ENCODE measurements at regions of chr10 and their contacts with region 1.

Region 1: DNA sequence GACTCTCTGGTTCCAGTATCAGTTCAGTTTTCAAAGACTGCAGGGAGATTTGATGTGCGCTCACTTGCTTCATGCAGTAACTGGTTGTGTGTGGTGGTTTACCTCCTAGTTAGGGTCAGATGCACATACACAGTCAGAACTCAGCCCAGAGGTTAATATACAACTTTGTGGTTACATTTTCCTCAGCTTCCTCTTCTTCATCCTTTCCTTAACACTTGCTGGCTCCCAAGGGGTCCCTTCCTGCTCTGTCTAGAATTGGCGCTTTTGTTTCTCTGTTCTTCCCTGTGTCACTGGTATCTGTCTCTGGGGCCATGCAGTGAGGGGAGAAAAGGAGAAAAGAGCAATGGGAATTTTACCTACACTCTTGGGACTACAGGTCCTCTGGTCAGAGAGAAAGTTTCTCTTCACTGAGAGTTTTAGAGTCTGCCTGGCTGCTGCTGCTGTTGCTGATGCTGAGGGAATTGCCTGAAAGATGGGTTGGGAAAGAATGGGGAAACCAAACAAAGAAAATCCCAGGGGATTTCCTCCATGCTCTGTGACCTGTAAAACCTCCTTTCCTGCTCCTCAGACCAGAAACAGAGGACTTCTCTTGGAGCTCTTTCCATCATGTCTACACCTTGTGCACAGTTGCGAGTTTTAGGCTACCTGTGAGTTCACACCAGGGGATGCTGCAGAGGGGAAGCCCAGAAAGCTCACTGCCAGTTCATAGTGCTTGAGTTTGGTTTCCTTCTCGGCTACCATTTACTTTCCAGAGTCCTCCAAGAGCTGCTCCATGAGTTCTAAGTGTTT is 74.6 kb downstream of the WDFY4 start:
- DNase-seq: no peak
- ATAC-seq: peak; percentile 87
- H3K4me3 Mint-ChIP-seq: peak overlapping the region; percentile 11
- H3K27ac Mint-ChIP-seq: peak overlapping the region; percentile 71
- H3K4me1 Mint-ChIP-seq: peaks cover 58% of the 10 kb centered on the region
- H3K27me3 Mint-ChIP-seq: no peaks in the 10 kb centered on the region
- CTCF ChIP-seq: no peak

Region 2: GRCh38 chr10:48725686-48726085 is 33.6 kb before region 1 on chr10:
- CTCF ChIA-PET with region 1: no interaction called
- POLR2A ChIA-PET with region 1: no interaction called
- intact Hi-C with region 1: no loop called
- DNase-seq: no peak
- ATAC-seq: no peak
- H3K4me3 Mint-ChIP-seq: no peak overlapping the region
- H3K27ac Mint-ChIP-seq: no peak overlapping the region
- H3K4me1 Mint-ChIP-seq: peaks cover 3% of the 10 kb centered on the region
- H3K27me3 Mint-ChIP-seq: no peaks in the 10 kb centered on the region
- CTCF ChIP-seq: no peak

Region 3: GRCh38 chr10:48802611-48803071 is 43.3 kb after region 1 on chr10:
- CTCF ChIA-PET with region 1: no interaction called
- POLR2A ChIA-PET with region 1: no interaction called
- intact Hi-C with region 1: loop called (anchors 5 kb)
- DNase-seq: no peak
- ATAC-seq: peak; percentile 75
- H3K4me3 Mint-ChIP-seq: peak overlapping the region; percentile 44
- H3K27ac Mint-ChIP-seq: peak overlapping the region; percentile 92
- H3K4me1 Mint-ChIP-seq: peaks cover 78% of the 10 kb centered on the region
- H3K27me3 Mint-ChIP-seq: no peaks in the 10 kb centered on the region
- CTCF ChIP-seq: no peak

Region 4: DNA sequence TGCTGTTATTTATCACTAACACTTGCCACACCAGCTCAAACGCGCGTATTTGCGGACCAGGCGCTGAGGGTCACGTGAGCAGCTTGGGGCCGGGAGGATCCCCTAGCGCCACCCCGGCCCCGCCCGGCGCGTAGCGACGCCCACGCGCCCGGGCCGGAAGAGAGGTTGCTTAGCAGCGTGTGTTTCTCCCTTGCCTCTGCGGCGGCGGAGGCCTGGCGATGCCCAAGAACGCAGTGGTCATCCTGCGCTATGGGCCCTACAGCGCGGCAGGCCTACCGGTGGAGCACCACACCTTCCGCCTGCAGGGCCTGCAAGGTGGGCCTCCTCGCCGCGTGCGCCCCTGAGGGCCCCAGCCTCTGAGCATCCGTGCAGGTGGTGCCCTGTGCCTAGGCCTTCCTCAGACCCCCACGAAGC is 920.2 kb after region 1 on chr10 and contains the start of gene C10orf53:
- CTCF ChIA-PET with region 1: no interaction called
- POLR2A ChIA-PET with region 1: no interaction called
- intact Hi-C with region 1: no loop called
- DNase-seq: no peak
- ATAC-seq: no peak
- H3K4me3 Mint-ChIP-seq: no peak within 1 kb of the TSS
- H3K27ac Mint-ChIP-seq: no peak within 1 kb of the TSS
- H3K4me1 Mint-ChIP-seq: no peaks in the 10 kb centered on the region
- H3K27me3 Mint-ChIP-seq: peaks cover 51% of the 10 kb centered on the region
- CTCF ChIP-seq: no peak
- total RNA-seq, gene C10orf53: not detected in 2 replicates